ENCODE measurements at regions of chr5 and their contacts with region 1.

Region 1: DNA sequence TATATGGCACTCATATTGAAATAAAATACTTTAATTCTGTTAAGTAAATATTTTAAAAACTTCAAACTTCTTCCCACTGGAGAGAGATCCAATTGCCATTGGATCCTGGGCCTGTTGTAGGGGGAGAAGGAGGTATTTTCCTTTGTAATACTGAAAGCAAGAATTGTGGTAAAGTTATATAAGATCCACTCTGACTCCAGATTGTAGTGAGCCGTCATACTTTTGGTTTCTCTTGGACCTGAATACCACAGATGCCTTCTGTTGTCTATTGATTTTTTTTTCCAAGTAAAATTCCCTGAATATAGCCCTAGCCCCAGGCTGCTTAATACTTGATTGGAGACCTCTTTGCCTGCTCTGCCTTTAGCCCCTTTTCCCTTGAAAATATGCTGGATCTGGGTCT is 86.9 kb downstream of the ATG10 start:
- DNase-seq: no peak
- ATAC-seq: no peak
- H3K4me3 ChIP-seq: no peak overlapping the region
- H3K4me3 Mint-ChIP-seq: no peak overlapping the region
- H3K27ac ChIP-seq: no peak overlapping the region
- H3K27ac Mint-ChIP-seq: no peak overlapping the region
- H3K4me1 ChIP-seq: no peaks in the 10 kb centered on the region
- H3K4me1 Mint-ChIP-seq: peaks cover 6% of the 10 kb centered on the region
- H3K27me3 ChIP-seq: no peaks in the 10 kb centered on the region
- H3K27me3 Mint-ChIP-seq: no peaks in the 10 kb centered on the region
- CTCF ChIP-seq: no peak

Region 2: DNA sequence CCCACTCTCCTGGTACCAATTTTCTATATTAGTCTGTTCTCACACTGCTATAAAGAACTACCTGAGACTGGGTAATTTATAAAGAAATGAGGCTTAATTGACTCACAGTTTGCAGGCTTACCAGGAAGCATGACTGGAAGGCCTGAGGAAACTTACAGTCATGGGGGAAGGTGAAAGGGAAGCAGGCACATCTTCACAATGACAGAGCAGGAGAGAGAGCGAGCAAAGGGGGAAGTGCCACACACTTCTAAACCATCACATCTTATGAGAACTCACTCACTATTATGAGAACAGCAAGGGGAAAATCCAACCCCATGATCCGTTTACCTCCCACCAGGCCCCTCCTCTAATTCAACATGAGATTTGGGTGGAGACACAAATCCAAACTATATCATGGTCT is 14.7 kb before region 1 on chr5:
- CTCF ChIA-PET with region 1: no interaction called
- POLR2A ChIA-PET with region 1: no interaction called
- intact Hi-C with region 1: loop called in 1 of 2 experiments (anchors 2 kb)
- DNase-seq: peak in 2 of 14 experiments; percentile 20 to 46
- ATAC-seq: no peak
- H3K4me3 ChIP-seq: no peak overlapping the region
- H3K4me3 Mint-ChIP-seq: no peak overlapping the region
- H3K27ac ChIP-seq: no peak overlapping the region
- H3K27ac Mint-ChIP-seq: no peak overlapping the region
- H3K4me1 ChIP-seq: no peaks in the 10 kb centered on the region
- H3K4me1 Mint-ChIP-seq: no peaks in the 10 kb centered on the region
- H3K27me3 ChIP-seq: no peaks in the 10 kb centered on the region
- H3K27me3 Mint-ChIP-seq: no peaks in the 10 kb centered on the region
- CTCF ChIP-seq: no peak

Measured in CD4-positive, alpha-beta T cell (primary cell).